Activated CD4-positive, alpha-beta memory T cell treated with anti-CD3 and anti-CD28 coated beads for 36 hours (primary cell): ENCODE measurements at regions of chr3 and their contacts with region 1.

Region 1: DNA sequence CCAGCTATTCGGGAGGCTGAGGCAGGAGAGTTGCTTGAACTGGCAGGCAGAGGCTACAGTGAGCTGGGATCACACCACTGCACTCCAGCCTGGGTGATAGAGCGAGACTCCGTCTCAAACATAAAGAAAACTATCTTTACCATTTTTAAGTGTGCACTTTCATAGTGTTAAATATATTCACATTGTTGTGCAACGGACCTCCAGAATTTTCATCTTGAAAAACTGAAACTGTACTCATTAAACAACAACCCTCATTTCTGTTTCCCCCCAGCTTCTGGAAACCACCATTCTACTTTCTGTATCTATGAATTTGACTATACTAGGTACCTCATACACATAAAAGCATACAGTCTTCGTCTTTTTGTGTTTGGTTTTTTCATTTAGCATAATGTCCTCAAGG is 375.1 kb downstream of the SHQ1 start:
- DNase-seq: no peak
- H3K4me3 Mint-ChIP-seq: no peak overlapping the region
- H3K27ac Mint-ChIP-seq: peak overlapping the region; percentile 61
- H3K4me1 Mint-ChIP-seq: peaks cover 40% of the 10 kb centered on the region
- H3K27me3 Mint-ChIP-seq: peaks cover 2% of the 10 kb centered on the region

Region 2: GRCh38 chr3:71998995-71999673 is 474.0 kb before region 1 on chr3:
- CTCF ChIA-PET with region 1: no interaction called
- POLR2A ChIA-PET with region 1: no interaction called
- intact Hi-C with region 1: loop called (anchors 5 kb)
- DNase-seq: peak; percentile 56
- H3K4me3 Mint-ChIP-seq: no peak overlapping the region
- H3K27ac Mint-ChIP-seq: peak overlapping the region; percentile 85
- H3K4me1 Mint-ChIP-seq: peaks cover 45% of the 10 kb centered on the region
- H3K27me3 Mint-ChIP-seq: peaks cover 12% of the 10 kb centered on the region

Region 3: GRCh38 chr3:72447059-72447946 is 25.9 kb before region 1 on chr3:
- CTCF ChIA-PET with region 1: no interaction called
- POLR2A ChIA-PET with region 1: interaction called, 4 read pairs
- intact Hi-C with region 1: loop called (anchors 1 kb)
- DNase-seq: peak; percentile 93
- H3K4me3 Mint-ChIP-seq: peak overlapping the region; percentile 61
- H3K27ac Mint-ChIP-seq: no peak overlapping the region
- H3K4me1 Mint-ChIP-seq: peaks cover 34% of the 10 kb centered on the region
- H3K27me3 Mint-ChIP-seq: peaks cover 23% of the 10 kb centered on the region

Region 4: GRCh38 chr3:72458358-72458757 is 14.8 kb before region 1 on chr3:
- CTCF ChIA-PET with region 1: no interaction called
- POLR2A ChIA-PET with region 1: no interaction called
- intact Hi-C with region 1: loop called (anchors 1 kb)
- DNase-seq: no peak
- H3K4me3 Mint-ChIP-seq: no peak overlapping the region
- H3K27ac Mint-ChIP-seq: no peak overlapping the region
- H3K4me1 Mint-ChIP-seq: peaks cover 17% of the 10 kb centered on the region
- H3K27me3 Mint-ChIP-seq: peaks cover 18% of the 10 kb centered on the region

Region 5: DNA sequence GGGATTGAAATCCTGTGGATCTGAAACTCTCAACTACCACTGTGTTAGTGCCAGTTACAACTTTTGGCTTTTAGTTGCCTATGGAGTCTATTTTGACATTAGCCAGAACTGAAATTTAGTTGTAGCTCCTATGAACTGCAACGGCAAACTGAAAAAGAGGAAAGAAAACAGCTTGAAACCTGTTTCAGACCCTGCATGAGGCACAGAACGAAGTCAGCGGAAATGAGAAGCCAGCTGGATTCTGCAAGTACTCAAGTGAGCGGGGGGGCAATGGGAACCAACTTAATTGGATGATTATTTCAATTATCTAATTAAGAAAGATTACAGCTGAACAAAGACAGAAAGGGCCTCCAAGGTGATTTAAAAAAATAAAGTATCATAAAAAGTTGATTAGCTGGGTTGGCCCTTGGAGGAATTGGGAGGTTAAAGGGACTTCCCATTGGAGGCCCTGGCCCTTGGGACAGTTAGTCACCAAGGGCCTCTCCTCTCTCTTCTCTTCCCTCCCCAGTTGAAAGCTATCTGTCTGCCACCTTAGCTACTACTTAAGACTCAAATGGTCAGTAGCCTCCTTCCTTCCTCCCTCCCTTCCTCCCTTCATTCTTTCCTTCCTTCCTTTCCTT is 23.0 kb after region 1 on chr3:
- CTCF ChIA-PET with region 1: no interaction called
- POLR2A ChIA-PET with region 1: no interaction called
- intact Hi-C with region 1: no loop called
- DNase-seq: no peak
- H3K4me3 Mint-ChIP-seq: no peak overlapping the region
- H3K27ac Mint-ChIP-seq: peak overlapping the region; percentile 19
- H3K4me1 Mint-ChIP-seq: peaks cover 14% of the 10 kb centered on the region
- H3K27me3 Mint-ChIP-seq: peaks cover 3% of the 10 kb centered on the region

Region 6: GRCh38 chr3:72582211-72582878 is 109.2 kb after region 1 on chr3:
- CTCF ChIA-PET with region 1: no interaction called
- POLR2A ChIA-PET with region 1: no interaction called
- intact Hi-C with region 1: no loop called
- DNase-seq: no peak
- H3K4me3 Mint-ChIP-seq: no peak overlapping the region
- H3K27ac Mint-ChIP-seq: no peak overlapping the region
- H3K4me1 Mint-ChIP-seq: no peaks in the 10 kb centered on the region
- H3K27me3 Mint-ChIP-seq: peaks cover 4% of the 10 kb centered on the region

Region 7: DNA sequence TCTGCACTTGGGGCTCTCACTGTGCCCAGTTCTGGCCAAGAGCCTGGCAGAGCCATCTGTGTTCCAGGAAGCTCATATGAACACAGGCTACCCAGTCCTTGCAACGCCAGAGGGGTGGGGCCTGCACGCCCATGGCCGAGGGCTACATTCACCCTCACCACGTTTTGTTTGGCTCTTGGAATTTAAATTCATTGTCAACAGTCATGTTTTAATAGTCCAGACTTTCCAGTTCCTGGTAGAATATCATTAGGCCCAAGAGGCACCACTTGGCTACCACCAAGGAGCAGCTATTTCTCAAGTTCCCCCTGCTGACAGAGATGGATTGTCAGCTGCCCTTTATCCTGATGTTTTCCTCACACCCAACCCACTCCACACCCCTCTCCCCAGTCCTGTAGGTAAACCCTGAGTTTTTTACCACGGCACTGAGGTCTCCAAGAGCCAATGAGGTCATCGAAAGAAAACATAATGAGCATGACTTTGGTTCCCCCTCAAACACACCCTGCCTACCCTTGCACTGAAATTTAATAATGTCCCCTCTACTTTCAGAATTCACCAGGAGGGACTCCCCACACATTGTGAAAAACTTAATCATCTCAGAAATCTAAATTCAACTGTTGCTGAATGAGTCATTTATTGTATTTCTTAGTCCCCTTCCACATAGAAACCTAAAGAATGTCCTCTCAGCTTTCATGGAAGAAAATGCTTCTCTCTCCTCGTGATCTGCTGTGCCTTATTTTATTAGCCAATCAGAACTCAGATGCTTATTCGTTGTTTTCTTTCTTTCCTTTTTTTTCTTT is 250.0 kb after region 1 on chr3:
- CTCF ChIA-PET with region 1: no interaction called
- POLR2A ChIA-PET with region 1: no interaction called
- intact Hi-C with region 1: loop called (anchors 1 kb)
- DNase-seq: peak; percentile 20
- H3K4me3 Mint-ChIP-seq: no peak overlapping the region
- H3K27ac Mint-ChIP-seq: peak overlapping the region; percentile 3
- H3K4me1 Mint-ChIP-seq: peaks cover 17% of the 10 kb centered on the region
- H3K27me3 Mint-ChIP-seq: no peaks in the 10 kb centered on the region